ENCODE measurements at regions of chr1 and their contacts with region 1.

Region 1: DNA sequence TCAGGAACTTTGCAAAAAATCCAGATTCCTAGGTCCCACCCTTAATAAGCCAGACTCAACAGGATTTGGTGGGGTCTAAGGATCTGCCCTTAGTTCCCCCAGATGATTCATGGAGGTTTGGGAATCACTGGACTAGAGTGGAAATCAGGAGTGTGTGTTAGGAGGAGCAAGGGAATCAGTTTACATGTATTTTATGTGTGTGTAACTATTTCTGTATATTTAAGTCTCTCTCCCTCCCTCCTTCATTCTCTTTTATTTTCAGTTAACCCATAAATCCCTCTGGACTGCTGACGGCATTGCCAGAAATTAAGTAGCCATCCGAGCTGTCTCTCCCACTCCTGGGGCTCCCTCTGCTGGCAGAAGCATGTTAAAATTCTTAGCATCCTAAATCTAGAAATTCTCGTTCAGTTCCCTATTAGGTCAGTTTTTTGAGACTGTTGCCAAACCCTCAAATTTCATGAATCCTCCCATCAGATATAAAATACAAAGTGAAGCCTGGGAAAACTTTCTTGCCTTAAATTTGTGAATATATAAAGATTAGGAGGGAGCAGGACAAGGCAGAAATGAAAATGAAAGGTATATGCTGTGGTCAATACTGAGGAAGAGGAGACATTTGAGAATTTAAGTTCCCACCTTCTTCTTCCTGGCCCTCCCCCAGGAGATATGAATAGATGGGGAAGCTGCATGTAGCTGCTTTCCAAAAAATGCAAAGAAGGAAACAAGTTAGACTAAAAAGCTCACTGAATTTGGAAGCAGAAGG is 11.7 kb upstream of the HSD11B1 start:
- DNase-seq: peak; percentile 21
- ATAC-seq: peak; percentile 54
- H3K4me3 Mint-ChIP-seq: no peak overlapping the region
- H3K27ac Mint-ChIP-seq: no peak overlapping the region
- H3K4me1 Mint-ChIP-seq: peaks cover 4% of the 10 kb centered on the region
- H3K27me3 Mint-ChIP-seq: peaks cover 3% of the 10 kb centered on the region
- CTCF ChIP-seq: no peak

Region 2: DNA sequence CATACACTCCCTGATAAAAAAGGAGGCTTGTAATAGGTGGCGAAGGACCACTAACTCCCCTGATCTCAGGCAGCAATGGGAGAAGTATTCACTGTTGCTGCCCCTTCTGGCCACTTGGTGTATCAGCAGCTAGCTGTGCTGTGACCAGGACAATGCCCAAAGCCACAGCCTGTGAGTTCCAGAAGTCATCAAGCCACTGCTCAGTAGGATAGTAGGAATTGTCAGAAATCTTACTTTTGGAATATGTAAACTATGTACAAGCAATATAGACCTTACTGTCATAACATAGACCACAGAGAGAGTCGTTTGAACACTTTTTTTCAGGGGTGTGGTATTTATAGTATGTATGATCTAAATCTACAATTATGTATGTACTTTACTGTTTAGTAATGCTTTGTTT is 357.7 kb before region 1 on chr1:
- CTCF ChIA-PET with region 1: no interaction called
- POLR2A ChIA-PET with region 1: no interaction called
- intact Hi-C with region 1: loop called (anchors 5 kb)
- DNase-seq: no peak
- ATAC-seq: no peak
- H3K4me3 Mint-ChIP-seq: no peak overlapping the region
- H3K27ac Mint-ChIP-seq: no peak overlapping the region
- H3K4me1 Mint-ChIP-seq: no peaks in the 10 kb centered on the region
- H3K27me3 Mint-ChIP-seq: peaks cover 7% of the 10 kb centered on the region
- CTCF ChIP-seq: no peak

Region 3: DNA sequence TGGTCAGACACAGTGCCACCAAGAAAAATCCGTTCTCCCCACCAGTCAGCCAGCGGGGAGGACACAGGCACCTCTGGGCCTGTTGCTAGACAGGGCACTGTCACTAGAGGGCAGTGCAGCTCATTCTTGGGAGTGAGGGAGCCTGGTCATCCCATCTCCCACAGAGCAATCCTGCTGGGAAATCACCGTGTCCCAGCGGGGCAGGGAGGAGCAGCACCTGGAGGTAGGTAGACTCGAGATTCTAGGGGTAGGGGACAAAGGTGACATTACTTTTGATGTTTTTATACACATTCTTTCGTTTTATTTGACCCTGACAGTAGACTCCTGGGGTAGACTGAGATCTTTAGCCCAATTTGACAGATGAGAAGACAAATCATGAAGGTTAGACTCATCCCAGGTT is 116.1 kb before region 1 on chr1:
- CTCF ChIA-PET with region 1: interaction called, 11 read pairs
- POLR2A ChIA-PET with region 1: no interaction called
- intact Hi-C with region 1: loop called (anchors 1 kb)
- DNase-seq: peak; percentile 49
- ATAC-seq: peak; percentile 79
- H3K4me3 Mint-ChIP-seq: no peak overlapping the region
- H3K27ac Mint-ChIP-seq: no peak overlapping the region
- H3K4me1 Mint-ChIP-seq: no peaks in the 10 kb centered on the region
- H3K27me3 Mint-ChIP-seq: peaks cover 16% of the 10 kb centered on the region
- CTCF ChIP-seq: peak; percentile 54

Region 4: DNA sequence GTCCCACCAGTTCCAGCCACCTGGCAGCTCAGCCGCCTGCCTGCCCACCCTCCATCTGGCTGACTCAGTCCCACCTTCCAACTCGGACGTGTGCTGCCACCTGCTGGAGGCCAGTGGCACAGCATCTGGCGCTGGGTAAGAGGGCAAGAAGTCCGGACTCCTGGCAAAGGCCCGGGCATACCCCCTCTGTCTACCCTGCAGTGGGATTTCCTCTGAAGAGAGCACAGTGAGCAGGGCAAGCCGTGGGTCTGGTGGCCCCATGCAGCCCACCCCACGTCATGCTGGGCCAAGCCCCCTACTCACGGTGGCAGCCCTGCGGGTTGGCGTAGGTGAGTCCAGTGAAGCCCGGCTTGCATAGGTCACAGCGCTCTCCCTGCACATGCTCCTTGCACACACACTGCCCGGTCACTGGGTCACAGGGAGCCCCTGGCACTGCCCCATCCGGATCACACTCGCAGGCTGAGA is 65.2 kb before region 1 on chr1:
- CTCF ChIA-PET with region 1: interaction called, 4 read pairs
- POLR2A ChIA-PET with region 1: no interaction called
- intact Hi-C with region 1: loop called (anchors 1 kb)
- DNase-seq: peak; percentile 71
- ATAC-seq: peak; percentile 91
- H3K4me3 Mint-ChIP-seq: no peak overlapping the region
- H3K27ac Mint-ChIP-seq: no peak overlapping the region
- H3K4me1 Mint-ChIP-seq: no peaks in the 10 kb centered on the region
- H3K27me3 Mint-ChIP-seq: peaks cover 10% of the 10 kb centered on the region
- CTCF ChIP-seq: peak; percentile 85